Aorta (tissue), 5 donors: ENCODE measurements at regions of chr6 and their contacts with region 1.

Region 1: DNA sequence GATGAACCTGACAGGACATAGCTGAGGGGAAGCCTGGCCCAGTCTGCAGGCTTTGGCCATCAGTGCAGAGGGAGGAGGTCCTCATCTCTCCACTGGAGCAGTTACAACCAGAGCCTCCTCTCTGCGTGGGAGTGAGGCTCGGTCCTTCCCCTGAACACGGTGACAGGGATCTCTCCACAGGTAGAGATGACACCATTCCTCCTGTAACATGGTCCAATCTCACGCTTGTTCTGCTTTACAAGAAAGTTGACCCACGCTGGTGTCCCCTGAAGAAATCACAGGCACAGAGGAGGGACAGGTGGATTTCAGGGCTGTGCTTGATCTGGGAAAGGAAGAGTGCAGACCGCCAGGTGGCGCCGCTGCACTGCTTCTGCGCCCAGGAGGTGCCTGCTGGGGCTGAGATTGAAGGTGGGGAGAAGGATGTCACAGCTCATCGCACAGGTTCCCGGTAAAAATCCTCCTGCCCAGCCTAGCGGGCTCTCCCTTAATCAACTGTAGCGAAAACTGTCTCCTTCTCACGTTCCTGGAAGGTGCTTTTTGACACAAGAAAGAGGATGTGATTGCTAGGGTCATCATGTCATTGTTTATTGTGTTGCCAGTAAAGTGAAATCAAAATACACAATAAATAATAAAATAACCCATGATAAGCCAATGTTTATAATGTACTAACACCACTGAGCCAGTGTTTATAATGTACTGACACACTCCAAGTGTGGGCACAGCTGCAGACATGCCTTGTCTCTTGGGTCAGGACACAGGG is 20.4 kb downstream of the HLA-G start:
- DNase-seq: peak; percentile 84 to 94
- ATAC-seq: peak; percentile 88
- H3K4me3 ChIP-seq: no peak overlapping the region
- H3K27ac ChIP-seq: no peak overlapping the region
- H3K4me1 ChIP-seq: no peaks in the 10 kb centered on the region
- H3K27me3 ChIP-seq: peaks cover 0 to 3% of the 10 kb centered on the region in 2 donors

Region 2: GRCh38 chr6:29792123-29793035 is 55.7 kb before region 1 on chr6:
- intact Hi-C with region 1: no loop called
- DNase-seq: peak; percentile 85 to 93
- ATAC-seq: peak; percentile 97
- H3K4me3 ChIP-seq: peak overlapping the region; percentile 33 to 54
- H3K27ac ChIP-seq: no peak overlapping the region
- H3K4me1 ChIP-seq: no peaks in the 10 kb centered on the region
- H3K27me3 ChIP-seq: no peaks in the 10 kb centered on the region

Region 3: GRCh38 chr6:30013291-30013922 is 165.4 kb after region 1 on chr6:
- intact Hi-C with region 1: loop called (anchors 1 to 2 kb)
- DNase-seq: peak in 1 of 2 donors; percentile 50
- ATAC-seq: peak; percentile 78
- H3K4me3 ChIP-seq: no peak overlapping the region
- H3K27ac ChIP-seq: no peak overlapping the region
- H3K4me1 ChIP-seq: no peaks in the 10 kb centered on the region
- H3K27me3 ChIP-seq: no peaks in the 10 kb centered on the region

Region 4: DNA sequence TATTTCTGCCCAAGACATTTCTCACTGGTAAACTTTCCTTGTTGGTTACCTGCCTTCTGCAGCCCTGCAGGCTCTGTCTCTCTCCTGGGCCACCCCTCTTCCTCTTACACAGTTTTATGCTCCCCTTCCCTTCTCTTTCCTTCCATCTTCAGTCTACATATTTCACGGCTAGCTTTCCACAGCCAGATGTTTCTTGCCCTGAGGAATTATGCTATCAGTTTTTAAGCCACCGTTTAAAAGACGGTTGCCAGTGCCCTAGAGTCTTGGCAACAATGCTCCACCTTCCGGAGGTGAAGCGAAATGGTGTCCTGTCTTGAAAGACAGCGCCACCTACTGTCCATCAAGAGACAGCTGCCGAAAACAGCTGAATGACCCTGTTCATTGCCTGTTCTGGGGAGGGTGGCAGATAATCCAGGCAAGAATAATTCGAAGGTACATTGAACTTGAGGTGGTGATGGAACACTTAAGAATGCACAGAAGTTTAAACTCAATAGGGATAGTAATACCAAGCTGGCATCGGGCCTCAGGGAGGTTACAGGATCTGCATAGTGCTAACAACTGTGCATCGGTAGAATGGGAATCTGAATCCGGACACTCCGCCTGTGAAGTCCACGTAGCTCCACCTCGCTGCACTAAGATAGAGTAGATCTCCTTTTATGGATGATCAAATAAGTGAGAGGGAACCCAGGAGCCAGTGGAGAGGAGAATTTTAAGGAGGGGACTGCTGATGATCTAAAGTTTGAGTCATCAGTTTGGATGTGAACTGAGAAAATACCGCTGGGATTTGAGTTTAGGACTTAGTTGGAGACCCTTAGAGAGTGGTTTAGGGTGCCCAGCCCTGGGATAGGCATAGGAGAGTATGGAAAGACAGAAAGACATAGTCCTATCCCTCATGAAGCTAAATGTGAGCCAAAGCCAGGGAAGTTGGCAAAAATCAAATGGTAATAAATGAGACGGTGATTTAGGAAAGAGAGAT is 283.1 kb after region 1 on chr6:
- intact Hi-C with region 1: loop called in 1 of 2 experiments (anchors 10 kb)
- DNase-seq: peak in 1 of 2 donors; percentile 62
- ATAC-seq: peak; percentile 88
- H3K4me3 ChIP-seq: no peak overlapping the region
- H3K27ac ChIP-seq: no peak overlapping the region
- H3K4me1 ChIP-seq: no peaks in the 10 kb centered on the region
- H3K27me3 ChIP-seq: no peaks in the 10 kb centered on the region